Prostate gland (tissue), 2 donors: ENCODE measurements at regions of chr3 and their contacts with region 1.

Region 1: GRCh38 chr3:15268033-15268631 is 62.1 kb downstream of the CAPN7 start:
- DNase-seq: peak; percentile 77
- H3K4me3 ChIP-seq: no peak overlapping the region
- H3K27ac ChIP-seq: no peak overlapping the region
- H3K4me1 ChIP-seq: no peaks in the 10 kb centered on the region
- H3K27me3 ChIP-seq: no peaks in the 10 kb centered on the region
- CTCF ChIP-seq: peak; percentile 90 to 94 (median 94)
- POLR2A ChIP-seq: no peak

Region 2: GRCh38 chr3:15332405-15333098 is 64.4 kb after region 1 on chr3 and contains the start of gene SH3BP5:
- intact Hi-C with region 1: loop called (anchors 1 kb)
- DNase-seq: peak; percentile 57
- H3K4me3 ChIP-seq: peak within 1 kb of the TSS; percentile 69 to 78
- H3K27ac ChIP-seq: peak within 1 kb of the TSS; percentile 74 to 82
- H3K4me1 ChIP-seq: no peaks in the 10 kb centered on the region
- H3K27me3 ChIP-seq: no peaks in the 10 kb centered on the region
- CTCF ChIP-seq: peak; percentile 57 to 84 (median 74)
- POLR2A ChIP-seq: peak; percentile 50
- total RNA-seq, gene SH3BP5: 13.3 to 71.6 TPM

Region 3: GRCh38 chr3:15377961-15378791 is 110.0 kb after region 1 on chr3:
- intact Hi-C with region 1: loop called (anchors 1 kb)
- DNase-seq: peak; percentile 84
- H3K4me3 ChIP-seq: no peak overlapping the region
- H3K27ac ChIP-seq: peak overlapping the region in 1 of 2 donors; percentile 32
- H3K4me1 ChIP-seq: no peaks in the 10 kb centered on the region
- H3K27me3 ChIP-seq: no peaks in the 10 kb centered on the region
- CTCF ChIP-seq: peak; percentile 82 to 96 (median 92)
- POLR2A ChIP-seq: no peak

Region 4: GRCh38 chr3:15557511-15557946 is 289.4 kb after region 1 on chr3:
- intact Hi-C with region 1: loop called (anchors 2 kb)
- DNase-seq: peak; percentile 24
- H3K4me3 ChIP-seq: no peak overlapping the region
- H3K27ac ChIP-seq: no peak overlapping the region
- H3K4me1 ChIP-seq: no peaks in the 10 kb centered on the region
- H3K27me3 ChIP-seq: no peaks in the 10 kb centered on the region
- CTCF ChIP-seq: peak in 3 of 4 experiments; percentile 39 to 62 (median 55)
- POLR2A ChIP-seq: no peak